Right ventricle myocardium inferior (tissue), 1 donor: ENCODE measurements at regions of chr18 and their contacts with region 1.

Region 1: GRCh38 chr18:3771121-3771971 is 321.4 kb downstream of the TGIF1 start:
- DNase-seq: peak; percentile 93
- ATAC-seq: peak; percentile 99

Region 2: GRCh38 chr18:3869848-3870247 is 98.5 kb after region 1 on chr18:
- intact Hi-C with region 1: loop called (anchors 5 kb)
- DNase-seq: no peak
- ATAC-seq: no peak

Region 3: DNA sequence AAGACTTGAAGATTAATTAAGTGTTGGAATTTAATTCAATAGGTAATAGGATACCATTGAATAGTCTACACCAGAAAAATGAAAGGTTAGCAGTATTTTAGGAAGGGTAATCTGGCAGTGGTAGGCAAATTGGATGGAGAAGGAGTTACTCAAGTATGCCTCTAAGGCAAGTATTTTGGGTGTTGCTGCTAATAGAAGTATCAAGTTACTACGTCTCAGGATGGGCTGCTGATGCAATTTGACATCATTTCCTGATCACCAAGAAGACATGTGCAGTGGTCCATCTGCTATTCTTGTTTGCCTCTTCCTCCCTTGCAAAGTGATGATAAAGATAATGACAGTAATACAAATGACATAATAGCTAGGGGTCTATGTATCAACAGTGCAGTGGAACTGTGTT is 164.0 kb after region 1 on chr18:
- intact Hi-C with region 1: no loop called
- DNase-seq: no peak
- ATAC-seq: no peak

Region 4: DNA sequence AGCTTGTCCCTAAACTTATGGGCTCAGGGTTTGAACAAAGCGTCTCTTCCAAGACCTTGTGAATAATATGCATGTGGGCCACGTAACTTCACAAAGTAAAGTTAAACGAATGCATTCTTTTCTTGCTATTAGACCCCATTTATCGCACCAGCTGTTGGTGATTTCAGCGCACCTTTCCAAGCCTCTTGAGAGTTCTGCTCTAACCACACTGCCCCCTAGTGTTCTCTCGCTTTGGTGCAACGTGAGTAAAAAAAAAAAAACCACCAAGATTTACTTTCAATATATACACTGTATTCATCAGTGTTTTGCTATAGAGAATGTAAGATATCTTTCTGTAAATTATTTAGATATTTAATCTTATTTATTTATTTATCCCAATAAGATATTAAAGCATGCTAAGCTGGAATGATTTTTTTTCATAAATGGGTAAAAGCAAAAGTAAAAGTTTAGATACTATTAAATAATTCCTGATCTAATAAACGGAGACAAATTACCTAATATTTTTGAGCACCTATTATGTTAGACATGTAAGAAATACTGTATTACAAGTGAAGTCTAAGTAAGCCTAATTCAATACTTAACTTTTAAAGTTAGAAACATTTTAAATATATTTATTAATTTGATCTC is 224.2 kb after region 1 on chr18:
- intact Hi-C with region 1: loop called (anchors 1 kb)
- DNase-seq: no peak
- ATAC-seq: peak; percentile 31

Region 5: GRCh38 chr18:4068552-4069158 is 297.3 kb after region 1 on chr18:
- intact Hi-C with region 1: loop called (anchors 5 kb)
- DNase-seq: no peak
- ATAC-seq: no peak